ENCODE measurements at regions of chr15 and their contacts with region 1.

Region 1: DNA sequence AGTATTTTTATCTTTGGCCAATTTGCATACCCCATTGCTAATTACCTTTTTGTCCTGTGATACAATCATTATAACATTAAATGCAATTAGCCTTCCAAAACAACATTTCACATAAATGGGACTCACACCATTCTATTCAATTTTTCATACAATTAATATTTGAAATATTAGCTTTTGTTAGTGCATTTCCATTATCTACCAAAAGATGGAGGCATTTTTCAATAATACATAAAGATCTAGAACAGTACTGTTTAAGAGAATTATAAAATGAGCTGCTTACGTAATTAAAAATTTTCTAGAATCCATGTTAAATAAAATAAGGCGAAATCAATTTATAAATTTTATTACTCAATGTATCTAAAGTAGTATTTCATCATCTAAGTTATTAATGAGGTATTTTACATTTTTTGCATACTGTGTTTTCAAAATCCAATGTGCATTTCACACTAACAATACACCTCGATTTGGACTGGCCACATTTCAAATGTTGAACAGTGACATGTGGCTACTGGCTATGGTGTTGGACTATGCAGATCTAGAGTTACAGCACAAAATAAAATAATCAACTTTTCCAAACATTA is 74.3 kb downstream of the TJP1 start:
- DNase-seq: no peak
- H3K4me3 ChIP-seq: no peak overlapping the region
- H3K27ac ChIP-seq: no peak overlapping the region
- H3K4me1 ChIP-seq: no peaks in the 10 kb centered on the region
- H3K27me3 ChIP-seq: no peaks in the 10 kb centered on the region
- CTCF ChIP-seq: peak; percentile 26 to 69 (median 48)
- POLR2A ChIP-seq: no peak

Region 2: GRCh38 chr15:29612096-29612495 is 135.8 kb before region 1 on chr15:
- intact Hi-C with region 1: no loop called
- DNase-seq: peak in 4 of 7 donors; percentile 10 to 57 (median 24)
- H3K4me3 ChIP-seq: no peak overlapping the region
- H3K27ac ChIP-seq: no peak overlapping the region
- H3K4me1 ChIP-seq: no peaks in the 10 kb centered on the region
- H3K27me3 ChIP-seq: no peaks in the 10 kb centered on the region
- CTCF ChIP-seq: no peak
- POLR2A ChIP-seq: no peak

Region 3: GRCh38 chr15:29638781-29639180 is 109.1 kb before region 1 on chr15:
- intact Hi-C with region 1: no loop called
- DNase-seq: no peak
- H3K4me3 ChIP-seq: no peak overlapping the region
- H3K27ac ChIP-seq: no peak overlapping the region
- H3K4me1 ChIP-seq: no peaks in the 10 kb centered on the region
- H3K27me3 ChIP-seq: no peaks in the 10 kb centered on the region
- CTCF ChIP-seq: no peak
- POLR2A ChIP-seq: no peak

Region 4: DNA sequence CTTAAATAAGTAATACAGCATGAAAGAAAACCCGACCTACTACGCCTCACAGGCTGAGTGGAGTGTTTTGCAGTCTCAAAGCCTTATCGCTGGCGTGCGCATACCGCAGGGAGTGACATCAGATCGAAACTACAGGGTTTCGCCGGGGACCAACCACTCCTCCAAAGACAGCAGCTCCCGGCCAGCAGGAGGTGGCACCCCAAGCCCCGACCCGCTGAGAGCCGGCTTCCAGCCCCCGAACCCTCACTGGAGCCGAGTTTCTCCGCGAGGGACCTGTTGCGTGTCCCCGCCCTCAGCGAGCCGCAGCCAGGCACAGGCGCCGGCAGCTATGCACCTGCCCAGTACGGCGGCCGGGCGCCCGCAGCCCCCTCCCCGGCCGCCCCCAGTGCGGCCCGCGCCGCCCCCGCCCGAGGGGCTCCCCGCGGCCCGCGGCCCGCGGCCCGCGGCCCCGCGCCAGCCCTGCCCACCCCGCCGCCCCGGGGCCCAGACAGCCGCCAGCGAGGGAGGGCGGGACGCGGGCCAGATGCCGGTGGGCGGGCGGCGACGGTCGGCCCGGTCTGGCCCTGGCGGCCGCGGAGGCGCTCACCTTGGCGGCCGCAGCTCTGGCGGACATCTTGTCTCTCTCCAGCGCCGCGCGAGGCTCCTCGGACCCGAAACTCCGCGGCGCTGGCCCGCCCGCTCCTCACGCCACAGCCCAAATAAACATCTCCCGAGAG is 73.6 kb after region 1 on chr15:
- intact Hi-C with region 1: loop called in 1 of 2 experiments (anchors 10 kb)
- DNase-seq: peak; percentile 74 to 89 (median 82)
- H3K4me3 ChIP-seq: peak overlapping the region; percentile 48 to 98 (median 89)
- H3K27ac ChIP-seq: peak overlapping the region; percentile 60 to 99 (median 97)
- H3K4me1 ChIP-seq: peaks cover 0 to 23% of the 10 kb centered on the region in 2 donors
- H3K27me3 ChIP-seq: no peaks in the 10 kb centered on the region
- CTCF ChIP-seq: peak in 2 of 6 experiments; percentile 21 to 38
- POLR2A ChIP-seq: peak; percentile 40 to 83

Region 5: GRCh38 chr15:29925227-29926082 is 177.5 kb after region 1 on chr15:
- intact Hi-C with region 1: loop called (anchors 5 to 10 kb)
- DNase-seq: peak; percentile 55 to 81 (median 72)
- H3K4me3 ChIP-seq: no peak overlapping the region
- H3K27ac ChIP-seq: peak overlapping the region in 1 of 5 donors; percentile 55
- H3K4me1 ChIP-seq: no peaks in the 10 kb centered on the region
- H3K27me3 ChIP-seq: no peaks in the 10 kb centered on the region
- CTCF ChIP-seq: peak; percentile 52 to 86 (median 76)
- POLR2A ChIP-seq: no peak

Region 6: GRCh38 chr15:29935276-29936020 is 187.5 kb after region 1 on chr15:
- intact Hi-C with region 1: loop called in 1 of 2 experiments (anchors 10 kb)
- DNase-seq: peak in 2 of 7 donors; percentile 7 to 17
- H3K4me3 ChIP-seq: no peak overlapping the region
- H3K27ac ChIP-seq: no peak overlapping the region
- H3K4me1 ChIP-seq: no peaks in the 10 kb centered on the region
- H3K27me3 ChIP-seq: no peaks in the 10 kb centered on the region
- CTCF ChIP-seq: peak in 4 of 6 experiments; percentile 25 to 39 (median 28)
- POLR2A ChIP-seq: no peak

Measured in adrenal gland (tissue), 19 donors.